ENCODE measurements at regions of chr6 and their contacts with region 1.

Region 1: DNA sequence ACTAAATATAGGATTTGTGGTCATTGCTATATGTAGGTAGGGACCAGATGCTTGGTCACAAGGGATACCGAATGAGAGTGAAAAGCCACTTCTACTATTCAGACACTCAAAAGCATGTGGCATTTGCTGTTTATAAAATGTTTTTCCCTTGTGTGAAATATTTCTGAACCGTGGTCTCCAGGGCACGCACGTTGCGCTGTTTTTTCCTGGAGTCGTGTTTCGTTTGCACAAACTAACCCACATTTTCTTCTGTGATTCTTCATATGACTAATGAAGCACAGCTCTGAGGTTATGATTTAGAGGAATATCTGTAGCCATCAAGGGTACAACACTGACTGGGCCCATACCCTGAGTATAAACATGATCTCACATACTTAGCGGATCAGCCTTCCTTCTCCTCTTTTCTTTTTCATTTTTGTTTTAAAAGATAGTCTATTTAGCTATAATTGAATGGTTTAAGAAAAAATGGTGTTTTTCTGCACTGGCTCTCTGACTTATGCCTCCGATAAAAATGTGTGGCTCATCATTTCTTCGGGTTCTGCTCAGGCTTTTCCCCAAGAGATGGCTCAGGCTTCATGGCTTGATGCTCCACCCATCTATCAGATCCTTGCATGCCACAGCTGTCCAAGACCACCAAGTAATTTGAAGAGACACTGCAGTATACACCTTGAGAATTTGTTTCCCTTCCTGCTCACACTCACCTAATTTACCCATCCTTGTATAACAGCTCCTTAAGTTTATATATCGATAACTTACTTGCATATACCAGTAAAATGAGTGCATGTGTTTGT is 59.9 kb upstream of the HBS1L start:
- DNase-seq: no peak
- ATAC-seq: no peak
- H3K4me3 ChIP-seq: no peak overlapping the region
- H3K4me3 Mint-ChIP-seq: peak overlapping the region in 8 of 10 donors; percentile 7 to 83 (median 36)
- H3K27ac ChIP-seq: no peak overlapping the region
- H3K27ac Mint-ChIP-seq: peak overlapping the region in 7 of 9 donors; percentile 6 to 92 (median 49)
- H3K4me1 ChIP-seq: peaks cover 19 to 42% of the 10 kb centered on the region in 2 donors
- H3K4me1 Mint-ChIP-seq: peaks cover 26 to 88% (median 76%) of the 10 kb centered on the region in 7 donors
- H3K27me3 ChIP-seq: no peaks in the 10 kb centered on the region
- H3K27me3 Mint-ChIP-seq: peaks cover 0 to 7% (median 0%) of the 10 kb centered on the region in 5 donors

Region 2: GRCh38 chr6:135014353-135014832 is 100.2 kb before region 1 on chr6:
- CTCF ChIA-PET with region 1: no interaction called
- POLR2A ChIA-PET with region 1: no interaction called
- intact Hi-C with region 1: no loop called
- DNase-seq: peak in 7 of 9 donors; percentile 25 to 66 (median 52)
- ATAC-seq: peak; percentile 89
- H3K4me3 ChIP-seq: peak overlapping the region; percentile 8
- H3K4me3 Mint-ChIP-seq: peak overlapping the region; percentile 3 to 83 (median 71)
- H3K27ac ChIP-seq: peak overlapping the region; percentile 62
- H3K27ac Mint-ChIP-seq: peak overlapping the region; percentile 76 to 94 (median 85)
- H3K4me1 ChIP-seq: peaks cover 18 to 51% of the 10 kb centered on the region in 2 donors
- H3K4me1 Mint-ChIP-seq: peaks cover 43 to 85% (median 81%) of the 10 kb centered on the region in 7 donors
- H3K27me3 ChIP-seq: no peaks in the 10 kb centered on the region
- H3K27me3 Mint-ChIP-seq: no peaks in the 10 kb centered on the region

Region 3: GRCh38 chr6:135094403-135094848 is 20.1 kb before region 1 on chr6:
- CTCF ChIA-PET with region 1: no interaction called
- POLR2A ChIA-PET with region 1: interaction called, 8 read pairs
- intact Hi-C with region 1: loop called in 1 of 2 experiments (anchors 1 kb)
- DNase-seq: peak in 6 of 9 donors; percentile 57 to 75 (median 64)
- ATAC-seq: peak; percentile 88
- H3K4me3 ChIP-seq: no peak overlapping the region
- H3K4me3 Mint-ChIP-seq: peak overlapping the region; percentile 3 to 70 (median 54)
- H3K27ac ChIP-seq: peak overlapping the region; percentile 56
- H3K27ac Mint-ChIP-seq: peak overlapping the region; percentile 80 to 98 (median 90)
- H3K4me1 ChIP-seq: peaks cover 17 to 41% of the 10 kb centered on the region in 2 donors
- H3K4me1 Mint-ChIP-seq: peaks cover 19 to 95% (median 79%) of the 10 kb centered on the region in 7 donors
- H3K27me3 ChIP-seq: no peaks in the 10 kb centered on the region
- H3K27me3 Mint-ChIP-seq: no peaks in the 10 kb centered on the region

Region 4: DNA sequence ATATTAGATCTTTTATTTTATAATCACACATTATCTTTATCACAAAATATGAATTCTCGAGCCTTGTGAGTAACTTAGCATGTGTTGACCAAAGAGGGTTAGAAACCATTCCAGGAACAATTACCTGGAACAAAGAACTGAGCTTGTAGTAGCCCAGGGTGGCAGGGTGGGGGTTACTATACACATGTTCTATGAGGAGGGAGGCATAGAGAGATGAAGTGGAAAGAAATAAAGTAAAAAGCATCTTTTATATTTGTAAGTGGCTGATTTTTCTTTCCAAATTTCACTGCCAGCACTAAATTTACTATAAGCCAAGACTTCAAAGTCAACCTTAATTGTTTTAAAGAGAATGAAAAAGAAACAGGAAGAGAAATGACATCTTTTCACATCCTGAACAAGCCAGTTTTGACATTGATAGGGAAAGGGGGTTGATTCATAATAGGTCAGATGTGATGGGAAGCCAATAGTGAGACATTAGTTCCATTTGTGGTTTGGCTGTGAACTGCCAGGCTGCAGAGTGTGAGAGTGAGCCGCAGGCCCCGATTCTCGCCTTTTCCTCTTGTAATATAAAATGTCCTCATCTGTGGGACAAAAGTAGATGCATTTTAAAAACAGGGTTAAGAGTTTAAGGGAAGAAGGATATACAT is 13.8 kb after region 1 on chr6:
- CTCF ChIA-PET with region 1: interaction called, 4 read pairs
- POLR2A ChIA-PET with region 1: interaction called, 66 read pairs
- intact Hi-C with region 1: loop called (anchors 1 kb)
- DNase-seq: peak in 8 of 9 donors; percentile 53 to 73 (median 66)
- ATAC-seq: peak; percentile 92
- H3K4me3 ChIP-seq: peak overlapping the region; percentile 36
- H3K4me3 Mint-ChIP-seq: peak overlapping the region; percentile 46 to 93 (median 77)
- H3K27ac ChIP-seq: peak overlapping the region; percentile 75
- H3K27ac Mint-ChIP-seq: peak overlapping the region; percentile 95 to 98 (median 97)
- H3K4me1 ChIP-seq: peaks cover 18 to 22% of the 10 kb centered on the region in 2 donors
- H3K4me1 Mint-ChIP-seq: peaks cover 26 to 64% (median 55%) of the 10 kb centered on the region in 7 donors
- H3K27me3 ChIP-seq: no peaks in the 10 kb centered on the region
- H3K27me3 Mint-ChIP-seq: no peaks in the 10 kb centered on the region

Region 5: DNA sequence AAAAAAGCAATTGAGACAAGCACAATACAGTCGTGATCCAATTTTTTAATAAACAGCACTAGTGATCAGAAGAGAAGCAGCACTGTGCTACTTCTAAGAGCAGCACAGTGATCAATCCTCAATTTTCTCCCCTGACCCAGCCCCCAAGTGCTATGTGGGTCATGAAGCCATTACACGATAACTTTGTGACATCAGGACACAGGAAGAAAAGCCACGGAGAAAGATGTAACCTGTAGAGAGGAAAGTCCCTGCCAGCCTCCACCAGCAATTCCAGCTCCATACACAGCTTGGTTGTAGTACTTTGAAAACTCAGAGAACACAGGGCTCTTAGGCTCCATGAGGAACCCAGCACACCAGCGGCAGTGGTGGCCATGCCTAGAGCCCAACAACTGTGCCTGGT is 21.3 kb after region 1 on chr6:
- CTCF ChIA-PET with region 1: interaction called, 3 read pairs
- POLR2A ChIA-PET with region 1: interaction called, 3 read pairs
- intact Hi-C with region 1: loop called in 1 of 2 experiments (anchors 2 kb)
- DNase-seq: peak in 1 of 9 donors; percentile 9
- ATAC-seq: peak; percentile 38
- H3K4me3 ChIP-seq: no peak overlapping the region
- H3K4me3 Mint-ChIP-seq: peak overlapping the region in 1 of 10 donors; percentile 26
- H3K27ac ChIP-seq: no peak overlapping the region
- H3K27ac Mint-ChIP-seq: peak overlapping the region in 4 of 9 donors; percentile 36 to 83 (median 73)
- H3K4me1 ChIP-seq: no peaks in the 10 kb centered on the region
- H3K4me1 Mint-ChIP-seq: peaks cover 14 to 44% (median 34%) of the 10 kb centered on the region in 7 donors
- H3K27me3 ChIP-seq: no peaks in the 10 kb centered on the region
- H3K27me3 Mint-ChIP-seq: peaks cover 0 to 2% (median 0%) of the 10 kb centered on the region in 5 donors

Region 6: DNA sequence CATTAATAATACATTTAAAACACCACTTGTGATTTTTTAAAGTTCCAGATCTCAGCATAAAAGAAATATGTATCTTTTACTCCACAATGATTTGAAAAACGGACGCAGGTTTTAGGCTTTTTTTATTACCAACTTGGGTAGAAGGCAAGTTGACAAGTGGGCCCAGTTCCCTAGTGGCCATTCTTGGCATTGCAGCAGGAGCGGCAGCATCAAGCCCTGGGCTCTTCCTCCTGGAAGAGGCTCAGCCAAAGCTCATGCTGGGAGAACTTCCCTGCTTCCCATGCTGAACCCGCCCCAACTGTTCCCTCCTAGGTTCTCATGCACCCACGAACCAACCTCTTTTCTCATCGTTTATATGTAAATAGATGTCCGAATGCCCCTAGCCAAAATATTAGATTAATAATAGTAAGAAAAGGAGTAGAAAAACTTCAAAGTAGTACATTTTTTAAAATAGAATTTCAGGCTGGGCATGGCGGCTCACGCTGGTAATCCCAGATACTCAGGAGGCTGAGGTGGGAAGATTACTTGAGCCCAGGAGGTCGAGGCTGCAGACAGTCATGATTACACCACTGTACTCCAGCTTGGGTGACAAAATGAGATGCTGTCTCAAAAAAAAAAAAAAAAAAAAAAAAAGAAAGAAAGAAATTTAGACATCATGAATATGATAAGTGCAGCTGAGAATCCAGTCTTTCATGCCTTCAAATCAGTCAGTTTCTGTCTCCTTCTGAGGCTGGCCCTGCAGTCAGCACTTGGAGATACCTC is 48.3 kb after region 1 on chr6:
- CTCF ChIA-PET with region 1: no interaction called
- POLR2A ChIA-PET with region 1: no interaction called
- intact Hi-C with region 1: loop called in 1 of 2 experiments (anchors 5 kb)
- DNase-seq: peak in 2 of 9 donors; percentile 10 to 11
- ATAC-seq: no peak
- H3K4me3 ChIP-seq: no peak overlapping the region
- H3K4me3 Mint-ChIP-seq: peak overlapping the region in 6 of 10 donors; percentile 43 to 63 (median 59)
- H3K27ac ChIP-seq: peak overlapping the region; percentile 6
- H3K27ac Mint-ChIP-seq: peak overlapping the region in 8 of 9 donors; percentile 1 to 89 (median 47)
- H3K4me1 ChIP-seq: peaks cover 5 to 22% of the 10 kb centered on the region in 2 donors
- H3K4me1 Mint-ChIP-seq: peaks cover 11 to 57% (median 37%) of the 10 kb centered on the region in 7 donors
- H3K27me3 ChIP-seq: no peaks in the 10 kb centered on the region
- H3K27me3 Mint-ChIP-seq: no peaks in the 10 kb centered on the region